ENCODE measurements at regions of chr9 and their contacts with region 1.

Region 1: GRCh38 chr9:91029650-91030361 is 228.2 kb downstream of the SYK start:
- H3K4me3 Mint-ChIP-seq: no peak overlapping the region
- H3K27ac Mint-ChIP-seq: no peak overlapping the region
- H3K4me1 Mint-ChIP-seq: no peaks in the 10 kb centered on the region
- H3K27me3 Mint-ChIP-seq: peaks cover 19% of the 10 kb centered on the region

Region 2: GRCh38 chr9:90921111-90921510 is 108.7 kb before region 1 on chr9:
- intact Hi-C with region 1: loop called (anchors 10 kb)
- H3K4me3 Mint-ChIP-seq: no peak overlapping the region
- H3K27ac Mint-ChIP-seq: no peak overlapping the region
- H3K4me1 Mint-ChIP-seq: peaks cover 14% of the 10 kb centered on the region
- H3K27me3 Mint-ChIP-seq: peaks cover 25% of the 10 kb centered on the region

Region 3: DNA sequence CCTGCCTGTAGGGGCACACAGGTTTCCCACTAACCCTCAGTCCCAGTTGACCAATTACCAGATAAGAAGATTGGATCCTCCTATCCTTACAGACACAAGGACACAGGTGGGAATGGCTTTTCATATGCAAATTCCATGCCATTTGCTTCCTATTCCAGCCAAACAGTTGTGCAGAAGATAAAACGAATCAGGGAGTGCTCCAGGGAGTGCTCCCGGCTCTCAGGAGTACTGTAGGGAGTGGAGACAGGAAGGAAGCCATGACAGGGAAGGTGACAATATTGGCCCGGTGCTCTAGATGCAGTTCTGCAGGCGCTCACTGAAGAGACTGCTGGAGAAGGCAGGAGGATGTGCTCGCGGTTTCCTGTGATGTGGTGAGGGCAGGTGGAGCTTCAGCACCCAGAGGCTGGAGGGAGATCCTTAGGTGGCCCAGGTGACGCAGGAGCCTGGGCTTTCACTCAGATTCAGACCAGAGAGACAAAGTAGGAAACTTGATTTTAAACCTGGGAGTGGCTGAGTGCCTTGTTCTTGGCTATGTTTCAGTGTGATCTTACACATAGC is 71.9 kb after region 1 on chr9:
- intact Hi-C with region 1: no loop called
- H3K4me3 Mint-ChIP-seq: no peak overlapping the region
- H3K27ac Mint-ChIP-seq: peak overlapping the region; percentile 1
- H3K4me1 Mint-ChIP-seq: peaks cover 33% of the 10 kb centered on the region
- H3K27me3 Mint-ChIP-seq: peaks cover 12% of the 10 kb centered on the region

Measured in dendritic cell treated with granulocyte-macrophage colony-stimulating factor and Interleukin-4, amounts not matched to agents 40 ng/mL and 50 ng/mL, for 4 days (primary cell).